ENCODE measurements at regions of chr1 and their contacts with region 1.

Region 1: DNA sequence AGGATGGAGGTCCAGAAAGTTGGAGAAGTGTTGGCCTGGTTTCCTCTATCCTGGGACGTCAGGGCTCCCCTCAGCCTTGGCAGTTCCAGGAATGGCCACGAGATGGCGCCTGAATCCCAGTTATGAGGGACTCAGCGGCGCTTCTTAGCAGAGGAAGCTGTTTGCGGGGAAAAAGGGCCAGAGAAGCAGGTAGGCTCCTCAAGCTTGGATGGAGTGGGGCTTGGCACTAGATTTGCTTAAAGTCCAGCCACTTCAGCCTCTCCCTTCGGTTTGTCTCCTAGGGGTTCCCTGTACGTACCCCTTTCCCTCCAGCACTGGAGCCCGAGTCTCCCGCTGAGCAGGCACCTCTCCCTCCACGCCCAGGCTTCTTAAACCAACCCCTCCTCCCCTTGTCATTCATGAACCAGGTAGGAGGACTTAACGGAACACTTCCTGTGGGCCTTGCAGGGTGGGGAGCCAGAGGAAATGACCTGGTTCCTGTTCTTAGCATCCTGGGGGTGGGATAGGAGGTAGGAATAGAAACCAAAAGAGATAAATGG is 32.0 kb upstream of the TENT5B start:
- DNase-seq: peak; percentile 80 to 95 (median 87)
- ATAC-seq: peak; percentile 92
- H3K4me3 ChIP-seq: peak overlapping the region; percentile 11 to 36
- H3K4me3 Mint-ChIP-seq: peak overlapping the region; percentile 55
- H3K27ac ChIP-seq: no peak overlapping the region
- H3K27ac Mint-ChIP-seq: no peak overlapping the region
- H3K4me1 ChIP-seq: peaks cover 13% of the 10 kb centered on the region
- H3K4me1 Mint-ChIP-seq: peaks cover 21% of the 10 kb centered on the region
- H3K27me3 ChIP-seq: peaks cover 0 to 6% of the 10 kb centered on the region in 2 experiments
- H3K27me3 Mint-ChIP-seq: no peaks in the 10 kb centered on the region
- CTCF ChIP-seq: peak; percentile 84

Region 2: DNA sequence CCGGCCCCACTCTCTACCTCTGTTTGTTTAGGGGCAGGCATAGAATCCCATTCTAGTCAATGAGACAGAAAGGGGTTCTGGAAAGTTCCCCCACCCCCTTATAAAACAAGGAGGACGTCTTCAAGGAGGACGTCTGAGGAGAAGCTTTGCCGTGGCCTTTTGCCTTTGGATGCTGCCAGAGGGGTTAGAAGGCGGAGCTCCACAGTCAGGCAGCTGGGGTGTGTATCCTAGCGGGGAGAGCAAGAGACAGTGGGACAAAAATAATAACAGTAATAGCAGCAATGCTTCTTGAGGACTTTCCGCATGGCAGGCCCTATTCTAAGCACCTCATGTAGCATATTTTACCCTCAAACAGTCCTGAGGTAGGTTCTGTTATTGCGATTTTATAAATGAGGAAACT is 16.2 kb after region 1 on chr1:
- CTCF ChIA-PET with region 1: interaction called, 40 read pairs
- POLR2A ChIA-PET with region 1: no interaction called
- intact Hi-C with region 1: no loop called
- DNase-seq: no peak
- ATAC-seq: no peak
- H3K4me3 ChIP-seq: no peak overlapping the region
- H3K4me3 Mint-ChIP-seq: no peak overlapping the region
- H3K27ac ChIP-seq: no peak overlapping the region
- H3K27ac Mint-ChIP-seq: no peak overlapping the region
- H3K4me1 ChIP-seq: no peaks in the 10 kb centered on the region
- H3K4me1 Mint-ChIP-seq: no peaks in the 10 kb centered on the region
- H3K27me3 ChIP-seq: no peaks in the 10 kb centered on the region
- H3K27me3 Mint-ChIP-seq: no peaks in the 10 kb centered on the region
- CTCF ChIP-seq: no peak

Region 3: GRCh38 chr1:27097484-27097917 is 52.8 kb after region 1 on chr1:
- CTCF ChIA-PET with region 1: interaction called, 303 read pairs
- POLR2A ChIA-PET with region 1: interaction called, 3 read pairs
- intact Hi-C with region 1: loop called in 1 of 2 experiments (anchors 1 kb)
- DNase-seq: peak; percentile 47 to 83 (median 73)
- ATAC-seq: peak; percentile 100
- H3K4me3 ChIP-seq: no peak overlapping the region
- H3K4me3 Mint-ChIP-seq: no peak overlapping the region
- H3K27ac ChIP-seq: no peak overlapping the region
- H3K27ac Mint-ChIP-seq: no peak overlapping the region
- H3K4me1 ChIP-seq: no peaks in the 10 kb centered on the region
- H3K4me1 Mint-ChIP-seq: peaks cover 3% of the 10 kb centered on the region
- H3K27me3 ChIP-seq: no peaks in the 10 kb centered on the region
- H3K27me3 Mint-ChIP-seq: no peaks in the 10 kb centered on the region
- CTCF ChIP-seq: peak; percentile 90

Region 4: GRCh38 chr1:27179379-27179778 is 134.7 kb after region 1 on chr1:
- CTCF ChIA-PET with region 1: no interaction called
- POLR2A ChIA-PET with region 1: no interaction called
- intact Hi-C with region 1: no loop called
- DNase-seq: no peak
- ATAC-seq: no peak
- H3K4me3 ChIP-seq: no peak overlapping the region
- H3K4me3 Mint-ChIP-seq: no peak overlapping the region
- H3K27ac ChIP-seq: no peak overlapping the region
- H3K27ac Mint-ChIP-seq: no peak overlapping the region
- H3K4me1 ChIP-seq: no peaks in the 10 kb centered on the region
- H3K4me1 Mint-ChIP-seq: no peaks in the 10 kb centered on the region
- H3K27me3 ChIP-seq: no peaks in the 10 kb centered on the region
- H3K27me3 Mint-ChIP-seq: no peaks in the 10 kb centered on the region
- CTCF ChIP-seq: no peak

Region 5: GRCh38 chr1:27192039-27192529 is 147.4 kb after region 1 on chr1:
- CTCF ChIA-PET with region 1: interaction called, 12 read pairs
- POLR2A ChIA-PET with region 1: no interaction called
- intact Hi-C with region 1: no loop called
- DNase-seq: no peak
- ATAC-seq: no peak
- H3K4me3 ChIP-seq: no peak overlapping the region
- H3K4me3 Mint-ChIP-seq: no peak overlapping the region
- H3K27ac ChIP-seq: no peak overlapping the region
- H3K27ac Mint-ChIP-seq: no peak overlapping the region
- H3K4me1 ChIP-seq: no peaks in the 10 kb centered on the region
- H3K4me1 Mint-ChIP-seq: no peaks in the 10 kb centered on the region
- H3K27me3 ChIP-seq: no peaks in the 10 kb centered on the region
- H3K27me3 Mint-ChIP-seq: no peaks in the 10 kb centered on the region
- CTCF ChIP-seq: no peak

Measured in CD8-positive, alpha-beta T cell (primary cell).